ENCODE measurements at regions of chr1 and their contacts with region 1.

Region 1: GRCh38 chr1:23496490-23497181 is 12.7 kb upstream of the ASAP3 start:
- DNase-seq: no peak
- ATAC-seq: no peak
- H3K4me3 Mint-ChIP-seq: no peak overlapping the region
- H3K27ac Mint-ChIP-seq: no peak overlapping the region
- H3K4me1 Mint-ChIP-seq: peaks cover 2% of the 10 kb centered on the region
- H3K27me3 Mint-ChIP-seq: peaks cover 11% of the 10 kb centered on the region

Region 2: DNA sequence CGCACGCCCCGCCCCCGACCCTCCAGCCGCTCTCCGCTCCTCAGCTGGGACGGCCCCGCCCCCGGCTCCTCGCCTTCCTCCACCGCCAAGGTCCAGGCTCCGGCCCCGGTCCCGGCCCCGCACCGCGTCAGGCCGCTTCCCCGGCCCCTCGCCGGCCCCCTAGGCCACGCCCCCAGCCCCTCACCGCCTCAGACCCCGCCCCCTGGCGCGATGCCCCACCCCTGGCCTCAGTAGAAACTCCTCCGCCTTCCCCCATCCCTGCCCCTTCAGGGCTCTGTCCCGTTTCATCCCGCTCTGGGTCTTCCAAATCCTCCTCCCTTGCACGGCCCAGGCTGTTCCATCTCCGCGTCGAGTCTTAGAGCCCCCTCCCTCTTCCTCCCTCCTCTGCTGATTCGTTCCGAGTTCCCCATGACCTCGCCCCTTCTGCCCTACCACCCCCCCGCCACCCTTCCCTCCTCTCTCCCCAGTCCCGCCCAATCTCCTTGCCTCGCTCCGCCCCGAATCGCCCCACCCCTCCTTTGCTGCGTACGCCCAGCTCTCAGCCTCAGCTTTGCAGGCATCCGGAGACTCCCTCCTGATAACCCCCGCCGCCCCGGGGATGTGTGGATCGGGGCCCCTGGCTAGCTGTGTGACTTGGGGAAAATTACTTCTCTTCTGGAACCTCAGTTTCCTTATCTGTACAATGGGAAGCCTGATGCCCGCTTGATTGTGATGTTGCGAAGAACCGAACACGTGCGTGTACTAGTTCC is 12.2 kb before region 1 on chr1:
- CTCF ChIA-PET with region 1: interaction called, 55 read pairs
- POLR2A ChIA-PET with region 1: interaction called, 3 read pairs
- DNase-seq: peak; percentile 95
- ATAC-seq: peak; percentile 91
- H3K4me3 Mint-ChIP-seq: peak overlapping the region; percentile 79
- H3K27ac Mint-ChIP-seq: peak overlapping the region; percentile 79
- H3K4me1 Mint-ChIP-seq: peaks cover 17% of the 10 kb centered on the region
- H3K27me3 Mint-ChIP-seq: peaks cover 58% of the 10 kb centered on the region

Region 3: GRCh38 chr1:23517581-23517980 is 20.9 kb after region 1 on chr1:
- CTCF ChIA-PET with region 1: interaction called, 262 read pairs
- POLR2A ChIA-PET with region 1: interaction called, 3 read pairs
- DNase-seq: no peak
- ATAC-seq: no peak
- H3K4me3 Mint-ChIP-seq: no peak overlapping the region
- H3K27ac Mint-ChIP-seq: no peak overlapping the region
- H3K4me1 Mint-ChIP-seq: peaks cover 8% of the 10 kb centered on the region
- H3K27me3 Mint-ChIP-seq: no peaks in the 10 kb centered on the region

Region 4: DNA sequence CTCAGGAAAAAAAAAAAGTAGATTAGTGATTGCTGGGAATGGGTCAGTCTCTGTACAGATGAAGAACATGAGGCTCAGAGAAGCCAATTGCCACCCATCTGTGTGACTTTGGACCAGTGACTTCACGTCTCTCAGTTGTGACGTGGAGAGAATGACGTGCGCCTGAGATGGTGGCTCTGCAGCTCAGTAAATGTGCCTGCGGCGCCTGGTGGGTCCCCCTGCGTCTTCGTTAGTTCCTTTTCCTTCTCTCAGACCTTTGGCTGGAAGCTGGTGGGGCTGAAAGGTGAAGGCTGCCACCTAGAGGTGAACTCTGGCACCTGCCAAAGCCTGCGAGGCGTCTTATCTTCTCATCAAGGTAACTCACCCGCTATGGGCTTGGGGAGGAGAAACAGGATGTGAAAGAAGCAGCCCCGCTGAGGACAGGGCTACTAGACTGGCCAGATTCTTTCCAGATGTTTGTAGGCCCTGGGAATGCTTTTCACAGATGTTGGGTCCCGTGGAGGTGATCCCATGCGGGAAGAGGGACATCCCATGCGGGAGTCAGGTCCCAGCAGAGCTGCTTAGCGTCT is 43.1 kb after region 1 on chr1:
- CTCF ChIA-PET with region 1: interaction called, 262 read pairs
- POLR2A ChIA-PET with region 1: interaction called, 8 read pairs
- DNase-seq: peak; percentile 97
- ATAC-seq: peak; percentile 97
- H3K4me3 Mint-ChIP-seq: peak overlapping the region; percentile 5
- H3K27ac Mint-ChIP-seq: peak overlapping the region; percentile 64
- H3K4me1 Mint-ChIP-seq: peaks cover 21% of the 10 kb centered on the region
- H3K27me3 Mint-ChIP-seq: no peaks in the 10 kb centered on the region

Region 5: DNA sequence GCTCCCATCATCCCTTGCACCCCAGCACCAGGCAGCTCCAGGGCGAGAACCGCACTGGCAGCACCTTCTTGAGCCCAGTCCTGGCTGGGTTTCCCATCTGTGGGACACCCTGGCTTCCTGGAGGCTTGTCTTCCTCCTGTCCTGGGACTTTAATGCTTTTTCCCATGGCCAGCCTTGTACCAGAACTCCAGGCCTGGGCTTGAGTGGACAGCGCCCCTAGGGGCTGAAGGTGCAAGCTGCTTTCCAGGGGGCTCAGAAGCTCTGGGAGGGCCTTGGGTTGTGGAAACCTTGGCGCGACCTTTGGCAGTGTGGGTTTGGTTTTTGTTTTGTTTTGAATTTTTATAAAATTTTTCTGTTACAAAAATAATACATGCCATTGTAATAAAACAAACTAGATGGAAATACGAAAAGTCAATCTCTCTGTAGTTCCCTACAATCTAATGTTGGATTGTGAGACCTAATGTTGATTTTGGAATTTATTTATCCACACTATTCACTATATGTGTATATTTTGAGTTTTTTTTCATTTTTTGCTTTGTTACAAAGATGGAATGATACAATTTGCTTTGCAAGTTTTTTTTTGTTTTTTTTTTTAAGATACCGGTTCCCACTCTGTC is 161.1 kb after region 1 on chr1:
- CTCF ChIA-PET with region 1: interaction called, 10 read pairs
- POLR2A ChIA-PET with region 1: no interaction called
- DNase-seq: peak; percentile 60
- ATAC-seq: peak; percentile 88
- H3K4me3 Mint-ChIP-seq: no peak overlapping the region
- H3K27ac Mint-ChIP-seq: no peak overlapping the region
- H3K4me1 Mint-ChIP-seq: no peaks in the 10 kb centered on the region
- H3K27me3 Mint-ChIP-seq: peaks cover 5% of the 10 kb centered on the region

Region 6: DNA sequence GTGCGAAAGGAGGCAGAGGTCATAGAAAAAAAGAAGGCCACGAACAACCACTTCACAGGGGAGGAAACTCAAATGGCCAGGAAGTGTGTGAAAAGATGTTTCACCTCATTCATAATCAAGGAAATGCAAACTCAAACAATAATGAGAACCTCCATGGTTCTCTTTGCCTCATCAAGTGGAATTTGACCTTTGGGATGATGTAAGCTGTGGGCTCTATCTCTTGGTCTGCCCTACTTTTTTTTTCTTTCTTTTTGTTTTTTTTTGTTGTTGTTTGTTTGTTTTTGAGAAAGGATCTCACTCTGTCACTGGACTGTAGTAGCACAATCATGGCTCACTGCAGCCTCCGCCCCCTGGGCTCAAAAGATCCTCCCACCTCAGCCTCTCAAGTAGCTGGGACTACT is 766.6 kb after region 1 on chr1:
- CTCF ChIA-PET with region 1: no interaction called
- POLR2A ChIA-PET with region 1: no interaction called
- DNase-seq: no peak
- ATAC-seq: no peak
- H3K4me3 Mint-ChIP-seq: no peak overlapping the region
- H3K27ac Mint-ChIP-seq: no peak overlapping the region
- H3K4me1 Mint-ChIP-seq: peaks cover 19% of the 10 kb centered on the region
- H3K27me3 Mint-ChIP-seq: peaks cover 24% of the 10 kb centered on the region